ENCODE measurements at regions of chr11 and their contacts with region 1.

Region 1: GRCh38 chr11:62645956-62646824 is at the start of gene GANAB:
- DNase-seq: peak; percentile 99
- H3K4me3 Mint-ChIP-seq: peak within 1 kb of the TSS; percentile 99
- H3K27ac Mint-ChIP-seq: peak within 1 kb of the TSS; percentile 96
- H3K4me1 Mint-ChIP-seq: peaks cover 21% of the 10 kb centered on the region
- H3K27me3 Mint-ChIP-seq: no peaks in the 10 kb centered on the region
- total RNA-seq, gene GANAB: 251 and 257 TPM in 2 replicates

Region 2: GRCh38 chr11:62573592-62574362 is 72.4 kb before region 1 on chr11 and contains the start of gene EEF1G:
- intact Hi-C with region 1: loop called (anchors 2 kb)
- DNase-seq: peak; percentile 99
- H3K4me3 Mint-ChIP-seq: peak within 1 kb of the TSS; percentile 96
- H3K27ac Mint-ChIP-seq: peak within 1 kb of the TSS; percentile 96
- H3K4me1 Mint-ChIP-seq: peaks cover 37% of the 10 kb centered on the region
- H3K27me3 Mint-ChIP-seq: no peaks in the 10 kb centered on the region
- total RNA-seq, gene EEF1G: 1,271 and 1,309 TPM in 2 replicates

Region 3: DNA sequence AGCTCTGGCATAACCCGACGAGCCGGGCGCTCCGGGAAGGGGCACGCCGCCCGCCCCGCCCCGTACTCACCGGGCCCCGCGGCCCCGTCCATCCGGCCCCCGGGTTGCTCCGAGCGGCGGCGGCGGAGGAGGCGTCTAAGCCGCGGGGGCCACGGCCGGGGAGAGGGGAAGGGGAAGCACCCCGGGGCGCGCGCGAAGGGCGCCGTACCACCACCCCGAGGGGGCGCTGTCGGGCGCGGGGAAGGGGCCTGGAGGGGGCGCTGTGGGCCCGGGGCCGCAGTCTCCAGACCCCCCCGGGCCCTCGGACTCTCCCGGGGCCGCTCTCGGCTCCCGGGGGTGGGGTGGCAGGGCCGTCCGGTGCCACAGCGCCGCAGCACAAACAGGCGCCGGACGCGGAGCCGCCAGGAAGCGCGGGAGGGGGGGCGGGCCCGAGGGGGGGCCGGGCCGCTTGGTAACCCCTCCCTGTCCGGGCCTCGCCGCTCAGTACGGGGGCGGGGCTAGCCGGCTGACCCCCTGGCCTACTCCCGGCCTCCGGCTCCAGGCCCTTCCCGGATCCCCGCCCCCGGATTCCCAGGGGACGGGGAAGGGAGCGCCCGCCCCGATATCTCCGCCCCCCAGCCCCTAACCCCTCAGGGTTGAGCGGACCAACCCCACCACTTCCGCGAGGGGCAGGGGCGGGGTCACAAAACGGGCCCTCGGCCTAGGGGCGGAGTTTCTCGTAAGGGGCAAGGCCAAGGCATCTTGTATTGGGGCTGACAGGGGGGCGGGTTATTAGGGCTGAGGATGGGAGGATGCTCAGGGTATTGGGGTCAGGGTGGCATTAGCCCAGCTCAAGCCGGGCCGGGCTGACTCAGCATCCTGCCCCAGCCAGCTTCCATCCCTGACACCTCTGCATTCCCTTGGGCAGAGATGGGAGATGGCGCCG is 33.6 kb before region 1 on chr11 and contains the starts of genes EML3 and ROM1:
- intact Hi-C with region 1: loop called (anchors 1 kb)
- DNase-seq: peak; percentile 97
- H3K4me3 Mint-ChIP-seq: peak within 1 kb of the TSS; percentile 98
- H3K27ac Mint-ChIP-seq: peak within 1 kb of the TSS; percentile 97
- H3K4me1 Mint-ChIP-seq: peaks cover 46% of the 10 kb centered on the region
- H3K27me3 Mint-ChIP-seq: no peaks in the 10 kb centered on the region
- total RNA-seq, gene EML3: 161 and 166 TPM in 2 replicates
- total RNA-seq, gene ROM1: 2.3 and 3.1 TPM in 2 replicates

Region 4: GRCh38 chr11:62621567-62622470 is 24.4 kb before region 1 on chr11 and contains the start of gene B3GAT3:
- intact Hi-C with region 1: loop called (anchors 1 kb)
- DNase-seq: peak; percentile 99
- H3K4me3 Mint-ChIP-seq: peak within 1 kb of the TSS; percentile 97
- H3K27ac Mint-ChIP-seq: peak within 1 kb of the TSS; percentile 99
- H3K4me1 Mint-ChIP-seq: peaks cover 25% of the 10 kb centered on the region
- H3K27me3 Mint-ChIP-seq: peaks cover 1% of the 10 kb centered on the region
- total RNA-seq, gene B3GAT3: 80.3 and 91.4 TPM in 2 replicates

Region 5: DNA sequence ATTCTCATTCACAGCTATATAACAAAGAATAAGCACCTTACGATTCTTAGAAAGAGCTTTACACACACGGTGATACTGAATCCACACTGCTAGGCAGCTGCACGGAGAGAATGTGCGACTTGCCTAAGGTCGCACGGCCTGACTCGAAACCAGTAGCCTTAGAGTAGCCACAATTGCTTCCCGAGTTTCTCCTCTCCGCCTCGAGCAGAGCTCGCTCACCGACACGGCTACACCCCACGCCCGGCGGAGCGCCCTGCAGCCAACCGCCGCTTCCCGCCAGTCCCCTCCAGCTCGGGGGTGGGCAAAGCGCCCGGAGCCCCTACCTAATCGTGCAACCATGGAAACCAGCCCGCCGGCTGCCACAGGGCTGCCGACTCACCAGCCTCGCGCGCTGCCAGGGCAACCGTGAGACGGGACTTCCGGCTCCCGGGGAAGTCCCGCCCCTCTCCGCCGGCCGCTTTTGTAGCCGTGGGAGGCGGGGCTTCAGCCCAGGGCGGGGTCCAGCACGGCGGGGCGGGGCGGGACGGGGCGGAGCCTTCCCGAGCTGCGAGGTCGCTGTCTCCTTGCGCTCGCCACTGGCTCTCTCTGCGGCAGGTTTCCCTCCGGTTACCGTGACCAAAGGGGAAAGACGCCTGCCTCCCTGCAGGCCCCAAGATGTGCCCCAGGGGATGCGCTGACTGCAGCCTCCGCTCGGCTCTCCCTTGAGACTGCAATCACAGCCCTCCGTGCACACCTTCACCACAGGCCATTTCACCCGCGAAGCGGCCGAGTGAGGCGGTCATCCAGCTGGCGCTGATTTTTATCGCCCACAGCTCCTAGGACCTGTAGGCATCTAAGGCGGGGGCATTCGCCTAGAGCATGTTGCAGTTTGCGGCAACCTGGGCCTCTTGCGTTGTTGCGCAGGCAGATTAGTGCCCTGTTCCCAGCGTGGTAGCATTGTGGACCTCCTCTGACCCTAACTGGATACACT is 60.0 kb after region 1 on chr11:
- intact Hi-C with region 1: loop called (anchors 1 kb)
- DNase-seq: peak; percentile 97
- H3K4me3 Mint-ChIP-seq: peak overlapping the region; percentile 96
- H3K27ac Mint-ChIP-seq: peak overlapping the region; percentile 89
- H3K4me1 Mint-ChIP-seq: peaks cover 33% of the 10 kb centered on the region
- H3K27me3 Mint-ChIP-seq: no peaks in the 10 kb centered on the region

Measured in activated CD4-positive, alpha-beta T cell treated with anti-CD3 and anti-CD28 coated beads, Interleukin-2, amount 10 ng/mL, durations not matched to agents 24 days and 14 days (primary cell).